ENCODE measurements at regions of chr9 and their contacts with region 1.

Region 1: DNA sequence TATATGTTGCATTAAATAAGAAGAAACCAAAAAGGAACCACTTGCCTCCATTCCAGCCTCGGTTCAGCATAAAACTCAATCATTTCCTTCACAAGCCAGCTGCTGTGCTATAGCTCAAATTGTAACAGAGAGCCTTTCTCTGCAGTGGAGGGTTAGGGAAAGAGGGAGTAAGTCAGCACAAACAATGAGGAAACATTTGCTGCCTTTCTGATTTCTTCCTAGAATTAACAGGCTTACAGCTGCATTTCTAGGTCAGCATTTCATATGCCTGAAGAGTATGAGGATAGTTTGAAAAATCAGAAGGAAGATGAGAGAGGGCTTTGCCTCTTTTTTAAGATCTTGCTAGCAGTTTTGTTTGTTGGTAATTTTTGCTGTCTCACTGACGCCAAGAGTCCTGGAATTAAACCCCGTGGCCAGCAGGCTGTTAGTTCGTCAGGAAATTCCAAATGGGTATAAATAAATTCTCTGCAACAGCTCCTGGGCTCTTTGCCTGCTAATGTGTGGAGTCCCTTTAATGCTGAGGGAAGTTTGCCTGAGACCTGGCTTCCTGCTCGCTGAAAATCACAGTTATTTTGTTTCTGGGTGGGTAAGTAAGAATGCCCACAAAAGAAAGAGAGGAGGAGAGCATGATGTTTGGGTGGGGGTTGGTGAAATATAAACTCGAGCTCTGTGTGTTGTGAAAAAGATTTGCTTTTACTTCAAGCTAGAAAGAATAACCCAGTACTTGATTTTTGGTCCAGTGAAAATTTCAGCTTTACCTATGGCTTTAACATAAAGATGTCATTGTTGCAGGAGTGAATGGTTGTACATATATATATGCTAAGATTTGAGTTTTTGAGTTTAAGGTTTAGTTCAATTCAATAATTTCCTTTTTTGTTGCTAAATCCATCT is 148.1 kb upstream of the DMRT1 start:
- DNase-seq: no peak
- CTCF ChIP-seq: no peak

Region 2: GRCh38 chr9:297104-297972 is 396.1 kb before region 1 on chr9:
- in situ Hi-C with region 1: no loop called
- DNase-seq: peak; percentile 32
- CTCF ChIP-seq: no peak

Region 3: GRCh38 chr9:459491-460444 is 233.7 kb before region 1 on chr9:
- in situ Hi-C with region 1: no loop called
- DNase-seq: no peak
- CTCF ChIP-seq: no peak

Region 4: GRCh38 chr9:757246-757881 is 63.9 kb after region 1 on chr9:
- in situ Hi-C with region 1: loop called (anchors 10 kb)
- DNase-seq: peak; percentile 42
- CTCF ChIP-seq: peak; percentile 60

Region 5: GRCh38 chr9:994005-994404 is 300.6 kb after region 1 on chr9:
- in situ Hi-C with region 1: no loop called
- DNase-seq: no peak
- CTCF ChIP-seq: no peak

Measured in GM13977 (cell line).